PC-3 (cell line): ENCODE measurements at regions of chr17 and their contacts with region 1.

Region 1: DNA sequence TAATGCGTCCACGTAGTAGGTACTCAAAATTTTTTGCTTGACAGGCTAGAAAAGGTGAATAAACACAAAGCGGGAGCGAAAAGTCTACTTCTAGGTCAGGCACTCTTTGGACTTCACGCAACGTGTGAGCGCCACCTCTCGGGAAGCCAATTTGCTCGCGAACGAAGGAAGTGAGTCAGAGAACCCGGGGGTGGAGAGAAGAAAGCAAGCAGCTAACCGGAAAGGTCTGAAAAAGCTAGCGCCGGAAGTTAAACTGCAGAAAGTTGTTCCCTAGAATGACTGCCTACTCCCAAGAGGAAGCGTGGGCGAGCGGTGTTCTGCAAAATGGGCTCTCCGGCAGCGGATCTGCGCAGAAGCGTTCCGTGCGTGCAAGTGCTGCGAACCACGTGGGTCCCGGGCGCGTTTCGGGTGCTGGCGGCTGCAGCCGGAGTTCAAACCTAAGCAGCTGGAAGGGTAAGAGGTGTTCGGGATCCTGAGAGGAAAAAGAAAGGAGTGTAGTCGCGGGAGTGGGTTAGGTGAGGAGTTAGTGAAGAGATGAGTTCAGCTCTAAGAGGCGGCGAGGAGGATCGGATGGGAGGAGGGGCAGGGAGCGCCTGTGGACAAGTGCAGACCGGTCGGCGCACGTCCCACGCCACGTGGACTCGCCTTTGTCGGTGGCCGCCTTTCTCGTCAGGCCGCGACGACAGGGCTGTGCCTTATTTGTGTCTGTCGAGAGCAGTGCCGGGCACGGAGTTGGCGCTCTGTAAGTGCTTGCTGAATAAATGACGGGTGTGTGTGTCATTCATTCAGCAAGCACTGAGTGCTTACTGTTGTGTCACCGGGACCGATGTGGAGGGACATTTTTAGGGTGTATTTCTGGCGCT is at the start of gene NME1:
- DNase-seq: peak; percentile 100
- ATAC-seq: peak; percentile 91
- H3K4me3 ChIP-seq: peak within 1 kb of the TSS; percentile 87
- H3K27ac ChIP-seq: peak within 1 kb of the TSS; percentile 74
- H3K4me1 ChIP-seq: peaks cover 21% of the 10 kb centered on the region
- H3K27me3 ChIP-seq: no peaks in the 10 kb centered on the region
- CTCF ChIP-seq: peak; percentile 98
- total RNA-seq, gene NME1: 538 and 592 TPM in 2 replicates

Region 2: DNA sequence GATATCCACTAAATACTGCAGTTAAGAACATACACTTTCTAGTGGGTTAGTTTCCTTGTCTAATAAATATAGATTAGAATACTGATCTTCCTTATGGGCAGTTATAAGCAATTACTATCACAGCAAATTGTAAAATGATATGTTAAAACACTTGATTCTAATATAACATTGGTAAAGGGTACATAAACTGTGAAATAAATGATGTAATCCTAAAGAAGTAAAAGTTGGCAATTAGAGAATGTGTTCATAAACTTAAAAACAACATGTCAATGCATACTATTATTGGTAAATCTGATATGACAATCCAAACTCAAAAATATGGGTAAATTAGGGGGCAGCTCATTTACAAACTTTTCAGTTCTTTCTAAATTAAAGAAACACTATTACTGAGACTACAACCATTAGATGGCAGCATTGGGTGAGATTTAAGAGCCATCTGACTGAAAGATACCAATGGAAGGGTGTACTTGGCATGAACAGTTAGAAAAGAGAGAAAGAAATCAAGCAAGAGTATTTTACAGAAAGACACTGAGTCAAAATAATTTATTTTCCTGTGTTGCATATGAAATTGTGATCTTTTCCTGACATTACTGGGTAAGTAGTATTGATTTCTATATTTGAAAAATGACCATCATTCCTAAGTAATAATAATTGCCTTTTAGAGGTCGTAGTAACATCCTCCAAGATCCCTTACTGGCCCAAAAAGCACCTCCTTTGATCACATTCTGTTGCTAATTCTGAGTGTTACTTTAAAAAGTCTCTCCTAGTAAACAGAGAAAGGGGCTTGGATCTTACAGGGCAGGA is 152.4 kb before region 1 on chr17:
- CTCF ChIA-PET with region 1: interaction called, 13 read pairs
- POLR2A ChIA-PET with region 1: interaction called, 3 read pairs
- intact Hi-C with region 1: loop called (anchors 1 kb)
- DNase-seq: peak; percentile 86
- ATAC-seq: peak; percentile 80
- H3K4me3 ChIP-seq: no peak overlapping the region
- H3K27ac ChIP-seq: no peak overlapping the region
- H3K4me1 ChIP-seq: no peaks in the 10 kb centered on the region
- H3K27me3 ChIP-seq: no peaks in the 10 kb centered on the region
- CTCF ChIP-seq: peak; percentile 90

Region 3: GRCh38 chr17:51064061-51064735 is 89.2 kb before region 1 on chr17:
- CTCF ChIA-PET with region 1: interaction called, 5 read pairs
- POLR2A ChIA-PET with region 1: interaction called, 4 read pairs
- intact Hi-C with region 1: loop called (anchors 1 kb)
- DNase-seq: peak; percentile 73
- ATAC-seq: peak; percentile 74
- H3K4me3 ChIP-seq: no peak overlapping the region
- H3K27ac ChIP-seq: peak overlapping the region; percentile 69
- H3K4me1 ChIP-seq: peaks cover 51% of the 10 kb centered on the region
- H3K27me3 ChIP-seq: no peaks in the 10 kb centered on the region
- CTCF ChIP-seq: no peak

Region 4: GRCh38 chr17:51085185-51085805 is 68.1 kb before region 1 on chr17:
- CTCF ChIA-PET with region 1: interaction called, 3 read pairs
- POLR2A ChIA-PET with region 1: interaction called, 5 read pairs
- intact Hi-C with region 1: loop called (anchors 1 kb)
- DNase-seq: peak; percentile 90
- ATAC-seq: peak; percentile 76
- H3K4me3 ChIP-seq: peak overlapping the region; percentile 56
- H3K27ac ChIP-seq: peak overlapping the region; percentile 95
- H3K4me1 ChIP-seq: peaks cover 33% of the 10 kb centered on the region
- H3K27me3 ChIP-seq: no peaks in the 10 kb centered on the region
- CTCF ChIP-seq: no peak

Region 5: DNA sequence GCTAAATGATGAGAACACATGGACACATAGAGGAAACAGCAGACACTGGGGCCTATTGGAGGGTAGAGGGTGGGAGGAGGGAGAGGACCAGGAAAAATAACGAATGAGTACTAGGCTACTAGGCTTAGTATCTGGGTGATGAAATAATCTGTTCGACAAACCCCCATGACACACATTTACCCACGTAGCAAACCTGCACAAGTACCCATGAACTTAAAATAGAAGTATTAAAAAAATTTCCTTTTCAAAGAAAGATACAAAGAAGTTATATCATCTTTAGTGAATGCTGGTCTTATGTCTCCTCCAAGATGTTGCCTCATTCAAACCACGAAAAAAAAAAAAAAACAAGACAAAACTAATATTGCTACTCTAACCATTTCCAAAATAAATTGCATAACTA is 74.7 kb after region 1 on chr17:
- CTCF ChIA-PET with region 1: no interaction called
- POLR2A ChIA-PET with region 1: no interaction called
- intact Hi-C with region 1: no loop called
- DNase-seq: no peak
- ATAC-seq: no peak
- H3K4me3 ChIP-seq: no peak overlapping the region
- H3K27ac ChIP-seq: no peak overlapping the region
- H3K4me1 ChIP-seq: 0 out of 2 replicates have a peak, but pooled peaks cover 6% of the 10 kb centered on the region
- H3K27me3 ChIP-seq: no peaks in the 10 kb centered on the region
- CTCF ChIP-seq: no peak

Region 6: GRCh38 chr17:51257150-51258081 is 104.0 kb after region 1 on chr17:
- CTCF ChIA-PET with region 1: no interaction called
- POLR2A ChIA-PET with region 1: no interaction called
- intact Hi-C with region 1: no loop called
- DNase-seq: peak; percentile 11
- ATAC-seq: no peak
- H3K4me3 ChIP-seq: peak overlapping the region; percentile 89
- H3K27ac ChIP-seq: no peak overlapping the region
- H3K4me1 ChIP-seq: peaks cover 23% of the 10 kb centered on the region
- H3K27me3 ChIP-seq: no peaks in the 10 kb centered on the region
- CTCF ChIP-seq: no peak

Region 7: DNA sequence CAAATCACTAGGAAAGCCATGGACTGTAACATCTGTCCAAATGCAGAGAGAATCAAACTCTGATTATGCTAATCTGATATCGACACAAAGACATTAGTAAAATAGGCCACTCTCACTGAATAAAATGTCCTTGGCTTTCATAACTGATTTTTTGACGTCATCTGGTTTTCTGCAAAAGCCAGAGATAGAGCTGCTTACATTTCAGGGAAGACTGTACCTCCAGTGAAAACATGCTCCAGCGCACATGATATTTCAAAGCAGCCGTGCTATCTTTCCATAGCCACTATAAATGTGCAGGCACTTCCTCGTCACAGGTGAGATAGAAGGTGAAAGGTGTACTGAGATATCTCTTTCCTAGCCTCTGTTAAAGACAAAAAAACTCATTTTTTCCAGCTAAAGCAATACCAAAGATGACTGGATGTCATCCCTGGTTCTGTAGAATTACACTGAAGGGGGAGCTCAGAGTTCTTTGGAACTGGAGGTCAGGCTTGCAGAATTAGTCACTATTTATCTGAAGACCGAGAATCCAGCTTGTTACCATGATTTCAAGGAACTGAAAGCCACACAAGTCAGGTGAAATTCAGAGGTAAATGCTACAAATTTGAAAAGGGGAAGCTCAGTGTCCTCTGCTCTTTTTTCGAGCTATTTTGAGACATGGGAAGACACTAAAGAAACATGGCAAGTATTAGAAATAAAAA is 755.5 kb after region 1 on chr17:
- CTCF ChIA-PET with region 1: no interaction called
- POLR2A ChIA-PET with region 1: no interaction called
- intact Hi-C with region 1: no loop called
- DNase-seq: no peak
- ATAC-seq: no peak
- H3K4me3 ChIP-seq: no peak overlapping the region
- H3K27ac ChIP-seq: no peak overlapping the region
- H3K4me1 ChIP-seq: no peaks in the 10 kb centered on the region
- H3K27me3 ChIP-seq: peaks cover 44% of the 10 kb centered on the region
- CTCF ChIP-seq: no peak

Region 8: GRCh38 chr17:52451292-52451861 is 1297.9 kb after region 1 on chr17:
- CTCF ChIA-PET with region 1: no interaction called
- POLR2A ChIA-PET with region 1: no interaction called
- intact Hi-C with region 1: no loop called
- DNase-seq: no peak
- ATAC-seq: no peak
- H3K4me3 ChIP-seq: no peak overlapping the region
- H3K27ac ChIP-seq: no peak overlapping the region
- H3K4me1 ChIP-seq: no peaks in the 10 kb centered on the region
- H3K27me3 ChIP-seq: no peaks in the 10 kb centered on the region
- CTCF ChIP-seq: no peak